Left ventricle myocardium inferior (tissue), 1 donor: ENCODE measurements at regions of chr2 and their contacts with region 1.

Region 1: GRCh38 chr2:201320701-201321100 is 36.4 kb downstream of the FLACC1 start:
- DNase-seq: no peak
- H3K4me3 ChIP-seq: no peak overlapping the region
- H3K27ac ChIP-seq: no peak overlapping the region
- H3K4me1 ChIP-seq: no peaks in the 10 kb centered on the region
- H3K27me3 ChIP-seq: no peaks in the 10 kb centered on the region
- CTCF ChIP-seq: no peak

Region 2: DNA sequence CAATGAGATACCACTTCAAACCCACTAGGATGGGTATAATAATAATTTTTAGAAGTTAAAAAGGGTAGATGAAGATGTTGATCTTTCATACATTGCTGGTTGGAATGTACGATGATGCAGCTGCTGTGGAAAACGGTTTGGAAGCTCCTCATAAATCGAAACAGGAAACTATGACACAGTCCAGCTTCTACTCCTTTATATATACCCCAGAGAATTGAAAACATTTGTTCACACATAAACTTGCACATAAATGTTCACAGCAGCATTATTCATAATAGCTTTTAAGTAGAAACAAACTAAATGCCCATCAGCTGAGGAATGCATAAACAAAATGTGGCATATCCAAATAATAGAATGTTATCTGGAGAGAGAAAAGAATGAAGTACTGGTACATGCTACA is 225.9 kb after region 1 on chr2:
- intact Hi-C with region 1: loop called (anchors 10 kb)
- DNase-seq: no peak
- H3K4me3 ChIP-seq: no peak overlapping the region
- H3K27ac ChIP-seq: no peak overlapping the region
- H3K4me1 ChIP-seq: no peaks in the 10 kb centered on the region
- H3K27me3 ChIP-seq: no peaks in the 10 kb centered on the region
- CTCF ChIP-seq: no peak